ENCODE measurements at regions of chr16 and their contacts with region 1.

Region 1: GRCh38 chr16:85610508-85611332 is 2.4 kb upstream of the GSE1 start:
- DNase-seq: peak; percentile 90
- ATAC-seq: peak; percentile 38
- H3K4me3 ChIP-seq: peak overlapping the region; percentile 72
- H3K27ac ChIP-seq: no peak overlapping the region
- H3K4me1 ChIP-seq: peaks cover 24% of the 10 kb centered on the region
- H3K27me3 ChIP-seq: no peaks in the 10 kb centered on the region
- CTCF ChIP-seq: peak; percentile 87

Region 2: DNA sequence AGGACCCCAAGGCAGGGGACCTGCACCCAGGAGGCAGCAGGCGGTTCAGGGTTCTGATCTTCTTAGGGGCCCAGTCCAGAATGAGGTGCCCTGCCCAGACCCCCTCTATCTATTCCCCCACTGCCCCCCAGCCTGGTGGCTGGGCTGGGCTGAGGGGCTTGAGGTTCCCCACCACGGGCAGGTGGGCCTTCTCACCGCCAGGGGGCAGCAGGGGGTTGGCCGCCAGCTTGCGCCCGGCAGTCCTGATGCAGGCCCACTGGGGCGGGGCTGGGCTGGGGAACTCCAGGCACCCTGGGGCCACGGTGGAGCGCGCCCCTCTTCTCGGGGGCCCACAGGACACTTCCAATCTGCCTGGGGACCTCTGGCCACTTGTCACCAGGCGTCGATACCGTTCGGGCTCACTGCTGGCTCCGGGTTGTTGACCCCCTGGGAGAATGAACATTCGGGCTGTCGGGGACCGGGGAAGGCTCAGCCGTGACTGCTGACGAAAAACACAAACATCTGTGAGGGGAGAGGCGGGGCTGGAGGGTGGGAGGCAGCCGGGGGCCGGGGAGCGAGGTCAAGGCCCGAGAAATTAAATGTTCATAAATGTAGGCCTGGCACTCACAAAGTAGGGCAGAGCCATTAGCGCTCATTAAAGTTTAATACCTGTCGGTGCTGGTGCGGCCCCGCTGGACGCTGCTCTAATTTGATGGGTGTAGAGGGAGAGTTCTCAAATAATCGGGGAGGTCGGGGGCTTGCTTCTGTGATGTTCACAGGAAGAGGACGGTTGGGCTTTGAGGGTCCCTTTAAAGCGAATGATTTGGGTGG is 216.8 kb before region 1 on chr16:
- CTCF ChIA-PET with region 1: interaction called, 3 read pairs
- POLR2A ChIA-PET with region 1: no interaction called
- intact Hi-C with region 1: loop called (anchors 10 kb)
- DNase-seq: peak; percentile 23
- ATAC-seq: no peak
- H3K4me3 ChIP-seq: no peak overlapping the region
- H3K27ac ChIP-seq: no peak overlapping the region
- H3K4me1 ChIP-seq: peaks cover 17% of the 10 kb centered on the region
- H3K27me3 ChIP-seq: no peaks in the 10 kb centered on the region
- CTCF ChIP-seq: peak; percentile 66

Region 3: GRCh38 chr16:85554112-85554813 is 56.5 kb before region 1 on chr16:
- CTCF ChIA-PET with region 1: interaction called, 5 read pairs
- POLR2A ChIA-PET with region 1: no interaction called
- intact Hi-C with region 1: loop called (anchors 1 kb)
- DNase-seq: peak; percentile 74
- ATAC-seq: peak; percentile 48
- H3K4me3 ChIP-seq: peak overlapping the region; percentile 91
- H3K27ac ChIP-seq: peak overlapping the region; percentile 61
- H3K4me1 ChIP-seq: peaks cover 19% of the 10 kb centered on the region
- H3K27me3 ChIP-seq: no peaks in the 10 kb centered on the region
- CTCF ChIP-seq: no peak

Region 4: DNA sequence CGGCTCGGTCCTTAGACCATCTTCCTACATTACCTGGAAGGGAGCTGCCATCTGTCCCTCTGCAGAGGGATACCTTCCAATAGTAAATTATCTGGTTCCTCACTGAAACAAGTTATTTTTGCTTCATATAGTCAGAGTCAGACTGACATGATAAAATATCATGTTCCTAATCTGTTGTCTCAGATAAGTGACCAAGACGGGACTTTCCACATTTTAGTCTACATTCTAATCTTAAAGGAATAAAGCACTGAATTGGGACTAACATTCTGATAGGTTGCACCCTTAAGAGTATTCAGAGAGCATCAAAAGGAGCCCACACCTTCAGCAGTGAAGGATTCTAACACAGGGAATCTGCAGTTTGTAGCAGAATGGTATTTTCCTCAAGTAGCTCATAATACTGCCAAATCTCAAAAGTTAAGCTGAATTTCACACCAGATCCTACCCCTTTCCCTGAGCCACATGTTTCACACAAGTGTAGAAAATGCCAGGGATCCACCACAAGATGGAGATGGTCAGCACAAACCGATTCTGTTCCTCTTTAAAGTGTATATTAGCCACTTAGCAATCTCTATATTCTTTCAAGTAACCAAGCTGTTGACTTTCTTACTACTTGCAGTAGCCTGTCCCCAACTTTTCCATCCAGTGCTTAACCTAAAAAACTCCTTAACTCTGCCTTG is 64.7 kb after region 1 on chr16:
- CTCF ChIA-PET with region 1: no interaction called
- POLR2A ChIA-PET with region 1: no interaction called
- intact Hi-C with region 1: no loop called
- DNase-seq: no peak
- ATAC-seq: peak; percentile 75
- H3K4me3 ChIP-seq: no peak overlapping the region
- H3K27ac ChIP-seq: no peak overlapping the region
- H3K4me1 ChIP-seq: no peaks in the 10 kb centered on the region
- H3K27me3 ChIP-seq: no peaks in the 10 kb centered on the region
- CTCF ChIP-seq: peak; percentile 54